ENCODE measurements at regions of chr15 and their contacts with region 1.

Region 1: GRCh38 chr15:44728576-44729407 is 7.5 kb upstream of the TRIM69 start:
- DNase-seq: peak; percentile 99

Region 2: DNA sequence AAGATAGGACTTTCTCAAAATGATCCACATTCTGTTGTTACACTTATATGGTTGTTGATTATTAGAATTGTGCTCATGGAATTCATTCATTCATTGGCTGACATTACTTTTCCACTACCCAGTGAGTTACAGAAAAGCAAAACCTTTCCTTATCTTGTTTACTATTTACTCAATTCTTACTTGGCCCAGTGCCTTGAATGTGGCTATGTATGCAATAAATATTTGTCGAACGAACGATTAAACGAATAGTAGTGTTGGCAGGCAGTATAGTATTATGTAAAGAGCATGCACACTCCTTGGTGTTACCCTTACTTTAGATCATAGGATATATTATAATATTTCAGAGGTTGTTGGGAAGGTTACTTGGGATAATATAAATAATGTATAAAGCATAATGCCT is 270.4 kb before region 1 on chr15:
- in situ Hi-C with region 1: no loop called
- DNase-seq: no peak

Region 3: DNA sequence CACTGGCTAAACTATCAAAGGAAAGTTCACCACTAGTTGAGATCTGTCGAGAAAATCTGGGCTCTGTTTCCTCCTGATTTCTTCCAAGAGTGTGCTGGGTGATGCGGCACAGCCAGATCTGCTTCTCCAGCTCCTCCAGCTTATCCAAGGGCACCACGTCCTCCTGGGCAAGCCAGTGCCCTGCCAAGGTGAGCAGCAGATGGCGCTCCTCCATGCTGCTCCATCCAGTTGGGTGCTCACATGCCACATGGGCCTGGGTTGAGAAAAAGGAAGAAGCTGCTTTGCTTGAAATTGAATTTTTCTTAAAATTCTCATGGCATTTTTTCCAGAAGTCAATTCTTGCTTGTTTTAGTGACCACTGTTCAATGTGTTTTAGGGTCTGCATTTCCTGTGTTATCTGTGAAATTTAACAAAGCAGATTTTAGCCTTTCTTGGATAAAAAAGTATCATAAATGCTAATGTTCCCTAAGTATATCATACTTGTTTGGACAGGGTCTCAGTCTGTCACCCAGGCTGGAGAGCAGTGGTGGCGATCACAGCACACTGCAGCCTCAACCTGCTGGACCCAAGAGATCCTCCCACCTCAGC is 144.5 kb before region 1 on chr15:
- in situ Hi-C with region 1: loop called (anchors 25 kb)
- DNase-seq: peak; percentile 65

Measured in KBM-7 (cell line).